ENCODE measurements at regions of chr11 and their contacts with region 1.

Region 1: GRCh38 chr11:113994077-113994954 is 19.4 kb downstream of the HTR3A start:
- DNase-seq: no peak
- H3K4me3 Mint-ChIP-seq: no peak overlapping the region
- H3K27ac Mint-ChIP-seq: no peak overlapping the region
- H3K4me1 Mint-ChIP-seq: no peaks in the 10 kb centered on the region
- H3K27me3 Mint-ChIP-seq: peaks cover 7% of the 10 kb centered on the region

Region 2: DNA sequence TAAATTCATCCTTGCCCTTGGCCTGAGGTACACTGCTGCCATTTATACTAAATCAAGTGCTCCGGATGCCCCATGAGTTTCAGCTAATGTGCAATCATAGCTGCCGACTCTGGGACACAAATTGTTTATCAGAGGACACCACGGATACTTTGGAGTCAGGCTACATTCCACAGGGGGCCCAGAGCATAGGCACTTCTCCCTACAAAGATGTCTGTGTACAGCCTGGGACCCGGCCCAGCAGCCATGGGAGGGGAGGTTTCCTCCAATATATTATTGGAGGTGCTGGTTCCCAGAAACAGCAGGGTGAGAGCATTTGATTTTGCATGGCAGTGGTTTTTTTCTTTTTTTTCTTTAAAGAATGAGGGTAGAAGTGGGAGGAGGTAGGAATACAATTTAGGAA is 58.5 kb before region 1 on chr11:
- intact Hi-C with region 1: no loop called
- DNase-seq: no peak
- H3K4me3 Mint-ChIP-seq: no peak overlapping the region
- H3K27ac Mint-ChIP-seq: no peak overlapping the region
- H3K4me1 Mint-ChIP-seq: no peaks in the 10 kb centered on the region
- H3K27me3 Mint-ChIP-seq: peaks cover 12% of the 10 kb centered on the region

Region 3: GRCh38 chr11:114036156-114036811 is 42.0 kb after region 1 on chr11:
- intact Hi-C with region 1: loop called (anchors 5 kb)
- DNase-seq: peak; percentile 28
- H3K4me3 Mint-ChIP-seq: no peak overlapping the region
- H3K27ac Mint-ChIP-seq: no peak overlapping the region
- H3K4me1 Mint-ChIP-seq: no peaks in the 10 kb centered on the region
- H3K27me3 Mint-ChIP-seq: peaks cover 21% of the 10 kb centered on the region